ENCODE measurements at regions of chr11 and their contacts with region 1.

Region 1: GRCh38 chr11:66880496-66881455 is 23.9 kb downstream of the LRFN4 start:
- DNase-seq: no peak
- ATAC-seq: no peak
- H3K4me3 ChIP-seq: no peak overlapping the region
- H3K27ac ChIP-seq: no peak overlapping the region
- H3K4me1 ChIP-seq: peaks cover 28% of the 10 kb centered on the region
- H3K27me3 ChIP-seq: no peaks in the 10 kb centered on the region
- CTCF ChIP-seq: no peak

Region 2: GRCh38 chr11:66491315-66491935 is 389.4 kb before region 1 on chr11:
- CTCF ChIA-PET with region 1: interaction called, 12 read pairs
- POLR2A ChIA-PET with region 1: no interaction called
- in situ Hi-C with region 1: no loop called
- intact Hi-C with region 1: no loop called
- DNase-seq: no peak
- ATAC-seq: peak; percentile 63
- H3K4me3 ChIP-seq: no peak overlapping the region
- H3K27ac ChIP-seq: no peak overlapping the region
- H3K4me1 ChIP-seq: no peaks in the 10 kb centered on the region
- H3K27me3 ChIP-seq: no peaks in the 10 kb centered on the region
- CTCF ChIP-seq: peak; percentile 50; the same call in 1 of the 2 replicates

Region 3: GRCh38 chr11:66548041-66548440 is 332.7 kb before region 1 on chr11:
- CTCF ChIA-PET with region 1: no interaction called
- POLR2A ChIA-PET with region 1: no interaction called
- in situ Hi-C with region 1: no loop called
- intact Hi-C with region 1: no loop called
- DNase-seq: no peak
- ATAC-seq: no peak
- H3K4me3 ChIP-seq: no peak overlapping the region
- H3K27ac ChIP-seq: no peak overlapping the region
- H3K4me1 ChIP-seq: peaks cover 9% of the 10 kb centered on the region
- H3K27me3 ChIP-seq: no peaks in the 10 kb centered on the region
- CTCF ChIP-seq: no peak

Region 4: GRCh38 chr11:66720223-66720947 is 160.4 kb before region 1 on chr11:
- CTCF ChIA-PET with region 1: no interaction called
- POLR2A ChIA-PET with region 1: interaction called, 10 read pairs
- in situ Hi-C with region 1: no loop called
- intact Hi-C with region 1: no loop called
- DNase-seq: no peak
- ATAC-seq: 0 out of 2 replicates have a peak, but pooled peaks have one; percentile 18
- H3K4me3 ChIP-seq: no peak overlapping the region
- H3K27ac ChIP-seq: no peak overlapping the region
- H3K4me1 ChIP-seq: no peaks in the 10 kb centered on the region
- H3K27me3 ChIP-seq: no peaks in the 10 kb centered on the region
- CTCF ChIP-seq: no peak

Region 5: DNA sequence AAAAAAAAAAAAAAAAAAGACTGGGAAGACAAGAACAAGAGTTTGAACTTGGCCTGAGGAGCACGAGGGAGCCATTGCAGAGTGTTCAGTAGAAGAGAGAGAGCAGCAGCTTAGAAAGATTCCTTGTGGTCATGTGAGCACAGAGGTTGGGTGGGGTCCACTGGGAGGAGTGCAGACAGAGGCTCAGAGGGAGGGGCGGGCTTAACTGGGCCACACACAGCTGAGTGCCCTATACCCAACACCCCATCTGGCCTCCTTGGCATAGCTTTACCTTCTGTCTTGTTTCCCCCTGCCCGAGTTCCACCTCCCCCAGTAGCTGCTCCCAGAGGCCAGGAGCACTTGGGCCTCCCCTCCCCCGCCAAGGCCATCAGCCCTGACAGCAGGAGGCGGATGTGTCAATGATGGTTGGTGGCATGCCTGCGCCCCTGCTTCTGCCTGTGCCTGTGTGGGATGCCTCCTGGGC is 106.4 kb after region 1 on chr11:
- CTCF ChIA-PET with region 1: no interaction called
- POLR2A ChIA-PET with region 1: no interaction called
- in situ Hi-C with region 1: no loop called
- intact Hi-C with region 1: no loop called
- DNase-seq: no peak
- ATAC-seq: no peak
- H3K4me3 ChIP-seq: no peak overlapping the region
- H3K27ac ChIP-seq: no peak overlapping the region
- H3K4me1 ChIP-seq: peaks cover 2% of the 10 kb centered on the region
- H3K27me3 ChIP-seq: no peaks in the 10 kb centered on the region
- CTCF ChIP-seq: no peak

Region 6: GRCh38 chr11:67095214-67095507 is 214.4 kb after region 1 on chr11:
- CTCF ChIA-PET with region 1: no interaction called
- POLR2A ChIA-PET with region 1: no interaction called
- in situ Hi-C with region 1: no loop called
- intact Hi-C with region 1: no loop called
- DNase-seq: no peak
- ATAC-seq: no peak; the same call in 1 of the 2 replicates
- H3K4me3 ChIP-seq: no peak overlapping the region
- H3K27ac ChIP-seq: no peak overlapping the region
- H3K4me1 ChIP-seq: no peaks in the 10 kb centered on the region
- H3K27me3 ChIP-seq: no peaks in the 10 kb centered on the region
- CTCF ChIP-seq: no peak